Gastrocnemius medialis (tissue), 4 donors: ENCODE measurements at regions of chr12 and their contacts with region 1.

Region 1: DNA sequence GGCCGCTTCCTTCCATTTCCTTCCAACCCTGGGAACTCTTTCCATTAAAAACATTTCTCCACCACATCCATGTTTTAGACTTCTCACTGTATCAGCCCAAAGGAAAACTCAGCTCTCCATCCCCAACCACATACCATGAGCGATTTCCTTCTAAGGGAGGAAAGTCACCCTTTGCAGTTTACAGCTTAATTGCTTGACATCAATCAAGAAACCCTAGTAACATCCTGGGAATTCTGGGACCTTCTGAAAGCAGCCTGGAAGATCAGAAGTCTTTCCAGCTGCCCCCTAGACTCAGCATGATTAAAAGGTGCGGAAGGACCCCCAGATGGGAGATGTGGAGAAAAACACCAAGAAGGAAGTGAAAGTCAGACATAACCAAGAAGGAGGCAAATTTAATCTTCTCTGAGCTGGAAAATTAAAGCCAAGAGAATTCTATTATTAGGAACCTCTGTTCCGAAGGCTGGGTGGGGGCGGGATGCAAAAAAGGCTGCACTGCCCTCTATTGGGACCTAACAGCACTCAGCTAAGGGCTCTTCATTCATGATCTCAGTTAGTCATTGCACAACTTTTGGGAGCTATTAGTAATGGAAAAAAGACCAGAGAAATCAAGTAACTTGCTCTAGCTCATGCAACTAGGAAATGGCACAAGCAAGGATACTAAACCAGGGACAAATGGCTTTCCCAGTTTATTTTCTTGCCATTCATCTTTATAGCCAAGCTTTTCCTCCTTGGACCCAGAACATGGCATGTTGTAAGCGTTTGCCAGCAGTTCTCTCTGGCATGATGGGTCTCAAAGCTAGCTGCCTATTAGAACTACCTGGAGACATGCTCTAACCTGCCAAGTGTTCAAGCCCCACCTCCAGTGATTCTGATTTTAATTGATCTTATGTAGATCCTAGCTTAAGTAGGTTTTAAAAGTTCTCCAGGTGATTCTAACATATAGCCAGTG is 73.1 kb upstream of the PLXNC1 start:
- DNase-seq: peak; percentile 60 to 80
- ATAC-seq: peak; percentile 78 to 80
- H3K4me3 ChIP-seq: peak overlapping the region in 3 of 4 donors; percentile 4 to 35 (median 13)
- H3K27ac ChIP-seq: peak overlapping the region; percentile 77 to 87 (median 80)
- H3K4me1 ChIP-seq: peaks cover 23 to 36% of the 10 kb centered on the region in 2 donors
- H3K27me3 ChIP-seq: no peaks in the 10 kb centered on the region
- CTCF ChIP-seq: peak; percentile 50 to 77 (median 63)
- POLR2A ChIP-seq: no peak

Region 2: GRCh38 chr12:93569656-93570551 is 505.4 kb before region 1 on chr12:
- in situ Hi-C with region 1: no loop called
- intact Hi-C with region 1: loop called (anchors 10 kb)
- DNase-seq: peak; percentile 71 to 73
- ATAC-seq: peak; percentile 77 to 81
- H3K4me3 ChIP-seq: peak overlapping the region; percentile 77 to 96 (median 85)
- H3K27ac ChIP-seq: peak overlapping the region; percentile 76 to 89 (median 83)
- H3K4me1 ChIP-seq: peaks cover 5 to 28% of the 10 kb centered on the region in 2 donors
- H3K27me3 ChIP-seq: peaks cover 11 to 28% (median 18%) of the 10 kb centered on the region in 3 donors
- CTCF ChIP-seq: peak; percentile 74 to 92 (median 82)
- POLR2A ChIP-seq: no peak

Region 3: DNA sequence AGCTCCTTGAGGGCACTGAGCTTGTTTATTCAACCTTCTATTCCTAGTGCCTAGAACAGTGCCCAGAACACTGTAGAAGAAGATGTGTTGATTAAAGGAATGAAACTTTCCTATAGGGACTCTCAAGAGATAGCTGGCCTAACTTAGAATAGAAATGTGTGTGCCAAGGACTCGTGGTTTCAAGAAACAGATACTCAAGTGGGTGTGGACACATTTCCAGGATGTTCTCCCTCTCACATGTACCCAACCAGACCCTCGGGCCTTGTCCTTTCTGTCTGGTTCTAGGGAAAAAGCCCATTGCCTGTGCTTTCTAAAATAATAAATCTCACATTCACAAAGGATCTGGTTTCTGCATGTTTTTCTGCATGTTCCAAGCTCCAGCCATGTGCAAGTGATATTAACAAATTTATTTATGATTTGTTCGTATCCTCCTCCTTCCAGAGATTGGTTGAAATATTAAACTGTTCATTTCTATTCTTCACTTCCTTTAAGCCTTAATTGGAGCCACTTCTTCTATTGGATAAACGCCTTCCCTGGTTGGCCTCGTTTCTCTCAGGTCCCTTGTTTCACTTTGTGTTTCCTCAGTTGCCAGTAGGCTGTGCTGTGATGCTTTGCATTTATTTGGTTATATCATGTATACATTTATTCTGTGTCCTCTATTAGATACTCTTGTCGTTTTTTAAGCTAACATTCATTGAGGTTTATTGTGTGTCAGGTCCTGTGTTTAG is 308.3 kb before region 1 on chr12:
- in situ Hi-C with region 1: loop called in 2 of 4 experiments (anchors 25 kb)
- intact Hi-C with region 1: loop called (anchors 2 kb)
- DNase-seq: peak; percentile 23 to 45
- ATAC-seq: peak; percentile 79 to 85
- H3K4me3 ChIP-seq: peak overlapping the region in 2 of 4 donors; percentile 4
- H3K27ac ChIP-seq: peak overlapping the region; percentile 51 to 73 (median 66)
- H3K4me1 ChIP-seq: peaks cover 33 to 38% of the 10 kb centered on the region in 2 donors
- H3K27me3 ChIP-seq: no peaks in the 10 kb centered on the region
- CTCF ChIP-seq: peak; percentile 51 to 77 (median 61)
- POLR2A ChIP-seq: no peak

Region 4: DNA sequence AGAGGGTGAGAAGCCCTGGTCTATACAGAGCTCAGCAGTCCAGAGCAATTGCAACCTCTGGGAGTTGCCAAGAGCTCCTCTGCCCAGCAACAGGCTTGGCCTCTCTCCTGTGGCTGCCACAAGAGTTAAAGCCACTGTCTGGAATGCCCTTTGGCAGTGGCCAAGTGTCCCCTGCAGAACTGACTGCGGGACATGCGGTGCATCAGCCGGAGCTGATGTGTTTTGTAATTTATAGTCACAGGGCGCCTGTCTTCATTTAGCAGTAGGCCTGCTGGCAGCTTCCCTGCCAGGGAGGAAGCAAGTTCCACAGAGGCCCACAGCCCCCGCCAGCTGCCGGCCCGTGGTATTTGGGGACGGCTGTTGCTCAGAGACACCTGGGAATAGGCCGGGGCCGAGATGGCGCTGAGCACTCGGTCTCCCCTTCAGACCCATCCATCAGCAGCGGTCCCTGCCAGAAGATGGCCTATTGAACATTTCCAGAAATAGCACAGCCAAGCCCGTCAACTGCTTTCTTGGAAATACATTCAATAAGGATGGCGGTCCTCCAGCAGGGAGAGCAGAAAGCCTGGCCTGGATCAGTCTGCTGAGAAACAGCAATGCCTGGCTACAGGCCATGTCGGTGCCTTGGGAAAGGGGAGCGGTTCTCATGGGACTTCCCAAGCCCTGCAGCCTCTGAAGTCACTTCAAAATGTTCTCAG is 180.7 kb before region 1 on chr12:
- in situ Hi-C with region 1: no loop called
- intact Hi-C with region 1: loop called (anchors 2 kb)
- DNase-seq: peak; percentile 91 to 96
- ATAC-seq: peak; percentile 89 to 95
- H3K4me3 ChIP-seq: peak overlapping the region; percentile 19 to 30 (median 26)
- H3K27ac ChIP-seq: peak overlapping the region; percentile 87 to 89 (median 88)
- H3K4me1 ChIP-seq: peaks cover 28% of the 10 kb centered on the region in 2 donors
- H3K27me3 ChIP-seq: no peaks in the 10 kb centered on the region
- CTCF ChIP-seq: no peak
- POLR2A ChIP-seq: peak in 1 of 2 donors; percentile 44

Region 5: GRCh38 chr12:93979189-93979588 is 96.1 kb before region 1 on chr12:
- in situ Hi-C with region 1: loop called in 1 of 4 experiments (anchors 5 kb)
- intact Hi-C with region 1: no loop called
- DNase-seq: no peak
- ATAC-seq: no peak
- H3K4me3 ChIP-seq: no peak overlapping the region
- H3K27ac ChIP-seq: peak overlapping the region in 1 of 4 donors; percentile 15
- H3K4me1 ChIP-seq: peaks cover 4 to 13% of the 10 kb centered on the region in 2 donors
- H3K27me3 ChIP-seq: no peaks in the 10 kb centered on the region
- CTCF ChIP-seq: peak in 4 of 5 experiments; percentile 35 to 48 (median 42)
- POLR2A ChIP-seq: no peak

Region 6: GRCh38 chr12:94053676-94054075 is 21.6 kb before region 1 on chr12:
- in situ Hi-C with region 1: no loop called
- intact Hi-C with region 1: loop called (anchors 2 kb)
- DNase-seq: no peak
- ATAC-seq: no peak
- H3K4me3 ChIP-seq: no peak overlapping the region
- H3K27ac ChIP-seq: no peak overlapping the region
- H3K4me1 ChIP-seq: peaks cover 1 to 3% of the 10 kb centered on the region in 2 donors
- H3K27me3 ChIP-seq: no peaks in the 10 kb centered on the region
- CTCF ChIP-seq: no peak
- POLR2A ChIP-seq: no peak

Region 7: DNA sequence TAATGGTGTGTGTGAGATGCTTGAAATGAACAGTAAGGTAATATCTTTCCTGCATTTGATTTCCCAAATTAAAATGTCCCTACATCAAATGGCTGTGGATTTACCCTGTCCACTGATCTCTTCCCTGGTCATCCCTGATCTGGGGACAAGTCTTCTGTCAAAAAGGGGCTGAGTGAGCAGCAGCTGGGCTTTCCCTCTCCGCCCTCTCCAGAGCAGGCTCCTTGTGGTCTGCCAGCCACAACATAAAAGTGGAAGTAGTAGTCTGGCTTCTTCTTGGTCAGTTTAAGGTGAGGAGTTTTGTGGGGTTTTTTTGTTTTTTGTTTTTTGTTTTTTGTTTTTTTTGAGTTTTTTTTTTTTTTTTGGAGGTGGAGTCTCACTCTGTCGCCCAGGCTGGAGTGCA is 47.9 kb after region 1 on chr12:
- in situ Hi-C with region 1: no loop called
- intact Hi-C with region 1: no loop called
- DNase-seq: no peak
- ATAC-seq: no peak
- H3K4me3 ChIP-seq: no peak overlapping the region
- H3K27ac ChIP-seq: no peak overlapping the region
- H3K4me1 ChIP-seq: no peaks in the 10 kb centered on the region
- H3K27me3 ChIP-seq: no peaks in the 10 kb centered on the region
- CTCF ChIP-seq: no peak
- POLR2A ChIP-seq: no peak

Region 8: GRCh38 chr12:94769047-94769420 is 693.8 kb after region 1 on chr12:
- in situ Hi-C with region 1: no loop called
- intact Hi-C with region 1: no loop called
- DNase-seq: no peak
- ATAC-seq: no peak
- H3K4me3 ChIP-seq: no peak overlapping the region
- H3K27ac ChIP-seq: no peak overlapping the region
- H3K4me1 ChIP-seq: no peaks in the 10 kb centered on the region
- H3K27me3 ChIP-seq: no peaks in the 10 kb centered on the region
- CTCF ChIP-seq: no peak
- POLR2A ChIP-seq: no peak